Astrocyte of the cerebellum (primary cell): ENCODE measurements at regions of chr2 and their contacts with region 1.

Region 1: DNA sequence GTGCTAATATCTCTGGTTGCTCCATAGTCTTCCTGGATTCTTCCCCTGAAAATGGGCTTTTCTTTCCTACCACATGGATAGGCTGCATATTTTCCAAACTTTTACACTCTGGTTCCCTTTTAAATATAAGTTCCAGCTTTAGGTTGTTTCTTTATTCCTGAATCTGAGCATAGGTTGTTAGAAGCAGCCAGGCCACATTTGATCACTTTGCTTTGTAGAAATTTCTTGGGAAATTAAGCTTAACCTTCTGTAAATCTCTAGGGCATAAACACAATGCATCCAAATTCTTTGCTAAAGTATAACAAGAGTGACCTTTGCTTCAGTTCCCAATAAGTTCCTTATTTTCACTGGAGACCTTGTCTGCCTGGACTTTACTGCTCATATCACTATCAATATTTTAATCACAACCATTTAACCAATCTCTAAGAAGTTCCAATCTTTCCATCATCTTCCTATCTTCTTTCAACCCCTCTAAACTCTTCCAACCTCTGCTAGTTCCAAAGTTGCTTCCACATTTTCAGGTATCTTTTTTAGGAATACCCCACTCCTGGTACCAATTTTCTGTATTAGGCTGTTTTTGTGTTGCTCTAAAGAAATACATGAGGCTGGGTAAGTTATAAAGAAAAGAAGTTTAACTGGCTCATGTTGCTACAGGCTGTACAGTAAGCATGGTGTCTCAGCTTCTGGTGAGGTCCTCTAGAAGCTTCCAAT is 389.6 kb upstream of the HS6ST1 start:
- DNase-seq: no peak
- H3K4me3 ChIP-seq: no peak overlapping the region
- CTCF ChIP-seq: no peak

Region 2: GRCh38 chr2:128638341-128639119 is 69.7 kb before region 1 on chr2:
- in situ Hi-C with region 1: loop called (anchors 5 kb)
- DNase-seq: peak; percentile 96
- H3K4me3 ChIP-seq: no peak overlapping the region
- CTCF ChIP-seq: no peak

Region 3: GRCh38 chr2:128986026-128986715 is 277.9 kb after region 1 on chr2:
- in situ Hi-C with region 1: no loop called
- DNase-seq: peak; percentile 40
- H3K4me3 ChIP-seq: no peak overlapping the region
- CTCF ChIP-seq: no peak